T-cell (primary cell): ENCODE measurements at regions of chr20 and their contacts with region 1.

Region 1: GRCh38 chr20:44518248-44518647 is 3.6 kb downstream of the SERINC3 start:
- DNase-seq: no peak
- ATAC-seq: no peak
- H3K4me3 ChIP-seq: no peak overlapping the region
- H3K4me3 Mint-ChIP-seq: peak overlapping the region in 1 of 3 donors; percentile 74
- H3K27ac ChIP-seq: no peak overlapping the region
- H3K27ac Mint-ChIP-seq: peak overlapping the region in 1 of 2 donors; percentile 24
- H3K4me1 ChIP-seq: peaks cover 19 to 55% of the 10 kb centered on the region in 2 experiments
- H3K4me1 Mint-ChIP-seq: peaks cover 72 to 77% (median 77%) of the 10 kb centered on the region in 3 donors
- H3K27me3 ChIP-seq: no peaks in the 10 kb centered on the region
- H3K27me3 Mint-ChIP-seq: no peaks in the 10 kb centered on the region

Region 2: GRCh38 chr20:44541992-44542391 is 23.7 kb after region 1 on chr20:
- CTCF ChIA-PET with region 1: interaction called in 1 of 2 experiments, 5 read pairs
- POLR2A ChIA-PET with region 1: interaction called, 4 to 12 read pairs
- DNase-seq: no peak
- ATAC-seq: no peak
- H3K4me3 ChIP-seq: no peak overlapping the region
- H3K4me3 Mint-ChIP-seq: no peak overlapping the region
- H3K27ac ChIP-seq: no peak overlapping the region
- H3K27ac Mint-ChIP-seq: no peak overlapping the region
- H3K4me1 ChIP-seq: no peaks in the 10 kb centered on the region
- H3K4me1 Mint-ChIP-seq: no peaks in the 10 kb centered on the region
- H3K27me3 ChIP-seq: peaks cover 0 to 3% of the 10 kb centered on the region in 2 experiments
- H3K27me3 Mint-ChIP-seq: peaks cover 0 to 2% of the 10 kb centered on the region in 2 donors

Region 3: GRCh38 chr20:44615169-44615791 is 97.0 kb after region 1 on chr20:
- CTCF ChIA-PET with region 1: interaction called in 1 of 2 experiments, 3 read pairs
- POLR2A ChIA-PET with region 1: interaction called in 1 of 2 experiments, 20 read pairs
- DNase-seq: peak in 10 of 35 experiments; percentile 6 to 40 (median 20)
- ATAC-seq: peak in 3 of 4 experiments; percentile 13 to 46 (median 31)
- H3K4me3 ChIP-seq: peak overlapping the region in 1 of 2 donors; percentile 27
- H3K4me3 Mint-ChIP-seq: peak overlapping the region in 2 of 3 donors; percentile 31 to 80
- H3K27ac ChIP-seq: peak overlapping the region; percentile 52
- H3K27ac Mint-ChIP-seq: peak overlapping the region; percentile 92 to 93
- H3K4me1 ChIP-seq: peaks cover 26 to 69% of the 10 kb centered on the region in 2 experiments
- H3K4me1 Mint-ChIP-seq: peaks cover 73 to 76% (median 73%) of the 10 kb centered on the region in 3 donors
- H3K27me3 ChIP-seq: no peaks in the 10 kb centered on the region
- H3K27me3 Mint-ChIP-seq: no peaks in the 10 kb centered on the region